Activated T-helper 1 cell treated with anti-CD3 and anti-CD28 coated beads, Interleukin-12 subunit alpha, Interleukin-12 subunit beta, Interleukin-2, Interleukin-4 antibody, amounts not matched to agents 30 ng/mL and 10 ng/mL and 1 ng/mL, durations not matched to agents 14 hours and 24 hours and 36 hours (primary cell): ENCODE measurements at regions of chr10 and their contacts with region 1.

Region 1: GRCh38 chr10:132536971-132537712 is 445 bp upstream of the INPP5A start:
- DNase-seq: peak; percentile 100
- H3K4me3 Mint-ChIP-seq: peak overlapping the region; percentile 70
- H3K27ac Mint-ChIP-seq: no peak overlapping the region
- H3K4me1 Mint-ChIP-seq: peaks cover 42% of the 10 kb centered on the region
- H3K27me3 Mint-ChIP-seq: peaks cover 7% of the 10 kb centered on the region

Region 2: GRCh38 chr10:131900350-131901146 is 636.6 kb before region 1 on chr10 and contains the start of gene PPP2R2D:
- intact Hi-C with region 1: loop called (anchors 1 kb)
- DNase-seq: peak; percentile 95
- H3K4me3 Mint-ChIP-seq: peak within 1 kb of the TSS; percentile 91
- H3K27ac Mint-ChIP-seq: peak within 1 kb of the TSS; percentile 83
- H3K4me1 Mint-ChIP-seq: peaks cover 55% of the 10 kb centered on the region
- H3K27me3 Mint-ChIP-seq: peaks cover 18% of the 10 kb centered on the region
- total RNA-seq, gene PPP2R2D: 37.6 and 38.4 TPM in 2 replicates

Region 3: GRCh38 chr10:132307823-132308587 is 229.1 kb before region 1 on chr10 and contains the start of gene STK32C:
- intact Hi-C with region 1: loop called (anchors 1 kb)
- DNase-seq: peak; percentile 80
- H3K4me3 Mint-ChIP-seq: peak within 1 kb of the TSS; percentile 87
- H3K27ac Mint-ChIP-seq: peak within 1 kb of the TSS; percentile 89
- H3K4me1 Mint-ChIP-seq: no peaks in the 10 kb centered on the region
- H3K27me3 Mint-ChIP-seq: peaks cover 39% of the 10 kb centered on the region
- total RNA-seq, gene STK32C: 14.6 and 15.5 TPM in 2 replicates

Region 4: DNA sequence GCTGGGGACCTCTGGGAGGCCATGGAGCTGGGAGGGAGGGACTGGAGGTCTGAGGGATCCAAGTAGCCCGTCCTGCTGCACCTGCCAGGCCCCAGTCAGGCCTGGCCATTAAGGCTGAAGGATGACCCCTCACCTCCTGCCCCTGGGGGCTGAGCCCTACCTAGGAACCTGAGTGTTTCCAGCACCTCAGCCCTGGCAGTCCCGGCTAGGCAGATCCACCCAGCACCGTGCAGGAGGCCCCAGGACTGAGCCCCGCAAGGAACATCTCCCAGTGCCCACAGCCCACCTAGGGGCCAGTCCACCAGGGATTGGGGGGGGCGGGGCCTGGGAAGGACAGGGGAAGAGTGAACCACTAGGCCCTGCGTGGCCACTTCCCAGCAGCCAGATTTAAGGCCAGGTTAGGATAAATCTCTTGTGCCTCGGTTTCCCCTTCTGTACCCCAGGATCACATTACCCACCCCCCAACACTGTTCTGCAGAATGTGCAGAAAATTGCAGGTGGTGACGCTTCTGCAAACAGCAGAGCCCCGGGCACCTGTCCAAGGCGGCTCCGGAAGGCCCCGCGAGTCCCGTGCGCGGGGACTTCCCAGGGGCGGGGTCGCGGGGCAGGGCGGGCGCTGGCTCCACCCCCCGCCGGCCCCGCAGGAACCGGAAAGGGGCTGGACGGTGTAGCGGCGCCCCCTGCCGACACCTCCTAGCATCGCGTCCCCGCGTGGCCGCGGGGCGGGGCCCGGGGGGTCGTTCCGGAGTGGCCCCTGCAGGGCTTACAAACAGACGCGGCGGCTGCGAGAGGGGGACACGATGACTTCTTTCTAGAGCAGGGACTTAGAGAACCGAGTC is 84.3 kb before region 1 on chr10:
- intact Hi-C with region 1: loop called (anchors 1 kb)
- DNase-seq: peak; percentile 85
- H3K4me3 Mint-ChIP-seq: no peak overlapping the region
- H3K27ac Mint-ChIP-seq: peak overlapping the region; percentile 58
- H3K4me1 Mint-ChIP-seq: peaks cover 4% of the 10 kb centered on the region
- H3K27me3 Mint-ChIP-seq: no peaks in the 10 kb centered on the region

Region 5: DNA sequence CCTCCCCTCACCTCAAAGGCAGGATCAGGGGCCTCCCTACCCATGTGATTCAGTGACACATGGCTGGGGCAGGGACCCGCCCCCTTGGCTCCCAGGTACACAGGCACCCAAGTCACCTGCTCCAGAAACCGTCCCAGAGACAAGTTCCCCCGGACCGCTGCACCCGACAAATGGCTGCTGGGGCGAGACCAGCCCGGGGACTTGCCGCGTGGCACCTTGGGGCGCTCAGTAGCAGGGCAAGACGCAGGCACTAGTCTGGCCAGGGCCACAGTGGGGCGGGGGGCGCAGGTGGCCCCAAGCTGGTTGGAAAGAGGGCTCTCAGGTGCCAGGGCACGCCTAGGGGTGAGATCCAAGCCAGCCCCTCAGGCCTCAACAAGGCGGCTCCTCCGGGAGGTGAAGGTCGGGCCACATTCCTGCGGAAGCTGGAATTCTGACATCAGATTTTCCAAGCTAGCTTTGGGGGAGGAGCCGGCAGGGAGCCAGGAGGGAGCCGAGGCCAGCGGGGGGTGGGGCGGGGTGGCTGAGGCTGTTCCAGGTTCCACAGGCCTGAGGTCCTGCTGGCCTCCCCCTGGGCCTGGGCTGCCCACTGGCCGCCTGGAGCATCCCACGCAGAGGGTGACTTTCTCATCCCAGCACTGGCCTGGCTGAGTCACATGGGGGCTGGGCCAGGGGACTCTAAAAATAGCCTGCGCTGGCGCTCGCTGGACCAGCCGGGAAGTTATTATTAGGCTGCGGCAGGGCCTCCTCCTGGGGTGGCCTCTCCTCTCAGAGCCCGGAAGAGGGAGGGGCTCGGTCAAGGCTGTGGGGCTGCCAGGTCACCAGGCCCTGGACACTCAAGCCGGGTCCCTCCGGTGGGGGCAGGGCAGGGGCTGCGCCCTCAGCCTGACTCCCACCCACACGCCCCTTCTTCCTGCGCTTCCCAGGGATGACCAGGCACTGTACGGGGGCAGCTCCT is 20.1 kb before region 1 on chr10:
- intact Hi-C with region 1: no loop called
- DNase-seq: no peak
- H3K4me3 Mint-ChIP-seq: no peak overlapping the region
- H3K27ac Mint-ChIP-seq: no peak overlapping the region
- H3K4me1 Mint-ChIP-seq: no peaks in the 10 kb centered on the region
- H3K27me3 Mint-ChIP-seq: peaks cover 5% of the 10 kb centered on the region

Region 6: DNA sequence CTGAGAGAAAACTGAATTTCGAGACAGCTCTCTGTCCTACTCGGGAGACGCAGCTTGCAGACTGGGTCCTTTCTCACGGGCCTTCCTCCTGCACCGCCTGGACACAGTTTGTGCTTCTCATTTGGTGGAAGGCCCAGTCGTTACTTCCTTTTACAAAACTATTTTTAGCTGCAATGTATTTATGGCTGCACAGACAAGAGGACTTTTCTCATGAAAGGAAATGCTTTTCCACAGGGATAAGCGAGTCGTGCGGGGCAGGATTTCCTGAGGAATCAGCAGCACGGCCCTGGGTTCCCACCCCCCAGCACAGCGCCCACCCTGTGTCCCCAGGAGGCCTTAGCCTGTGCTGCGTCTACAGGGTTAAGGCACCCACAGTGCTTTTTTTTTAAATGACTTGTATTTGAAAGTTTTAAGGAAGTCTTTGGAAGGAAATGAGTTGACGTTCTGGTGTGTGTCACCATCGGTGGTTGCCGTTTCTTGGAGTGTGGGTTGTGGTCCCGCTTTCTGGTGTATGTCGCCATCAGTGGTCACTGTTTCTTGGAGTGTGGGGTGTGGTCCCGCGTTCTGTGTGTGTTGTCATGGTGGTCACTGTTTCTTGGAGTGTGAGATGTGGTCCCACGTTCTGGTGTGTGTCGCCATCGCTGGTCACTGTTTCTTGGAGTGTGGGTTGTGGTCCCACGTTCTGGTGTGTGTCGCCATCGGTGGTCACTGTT is 51.3 kb after region 1 on chr10:
- intact Hi-C with region 1: loop called (anchors 2 kb)
- DNase-seq: peak; percentile 25
- H3K4me3 Mint-ChIP-seq: peak overlapping the region; percentile 62
- H3K27ac Mint-ChIP-seq: peak overlapping the region; percentile 83
- H3K4me1 Mint-ChIP-seq: peaks cover 27% of the 10 kb centered on the region
- H3K27me3 Mint-ChIP-seq: peaks cover 2% of the 10 kb centered on the region

Region 7: GRCh38 chr10:133357285-133358151 is 820.4 kb after region 1 on chr10 and contains the start of gene FUOM:
- intact Hi-C with region 1: loop called (anchors 2 kb)
- DNase-seq: peak; percentile 57
- H3K4me3 Mint-ChIP-seq: peak within 1 kb of the TSS; percentile 77
- H3K27ac Mint-ChIP-seq: peak within 1 kb of the TSS; percentile 48
- H3K4me1 Mint-ChIP-seq: no peaks in the 10 kb centered on the region
- H3K27me3 Mint-ChIP-seq: no peaks in the 10 kb centered on the region
- total RNA-seq, gene FUOM: 45.4 and 51.8 TPM in 2 replicates